Activated CD4-positive, alpha-beta T cell treated with anti-CD3 and anti-CD28 coated beads, Interleukin-2, amount 10 ng/mL, durations not matched to agents 7 days and 5 days (primary cell): ENCODE measurements at regions of chr6 and their contacts with region 1.

Region 1: GRCh38 chr6:112043032-112044007 is 10.6 kb upstream of the CCN6 start:
- DNase-seq: peak; percentile 94
- H3K4me3 Mint-ChIP-seq: peak overlapping the region; percentile 96
- H3K27ac Mint-ChIP-seq: peak overlapping the region; percentile 97
- H3K4me1 Mint-ChIP-seq: peaks cover 22% of the 10 kb centered on the region
- H3K27me3 Mint-ChIP-seq: no peaks in the 10 kb centered on the region

Region 2: DNA sequence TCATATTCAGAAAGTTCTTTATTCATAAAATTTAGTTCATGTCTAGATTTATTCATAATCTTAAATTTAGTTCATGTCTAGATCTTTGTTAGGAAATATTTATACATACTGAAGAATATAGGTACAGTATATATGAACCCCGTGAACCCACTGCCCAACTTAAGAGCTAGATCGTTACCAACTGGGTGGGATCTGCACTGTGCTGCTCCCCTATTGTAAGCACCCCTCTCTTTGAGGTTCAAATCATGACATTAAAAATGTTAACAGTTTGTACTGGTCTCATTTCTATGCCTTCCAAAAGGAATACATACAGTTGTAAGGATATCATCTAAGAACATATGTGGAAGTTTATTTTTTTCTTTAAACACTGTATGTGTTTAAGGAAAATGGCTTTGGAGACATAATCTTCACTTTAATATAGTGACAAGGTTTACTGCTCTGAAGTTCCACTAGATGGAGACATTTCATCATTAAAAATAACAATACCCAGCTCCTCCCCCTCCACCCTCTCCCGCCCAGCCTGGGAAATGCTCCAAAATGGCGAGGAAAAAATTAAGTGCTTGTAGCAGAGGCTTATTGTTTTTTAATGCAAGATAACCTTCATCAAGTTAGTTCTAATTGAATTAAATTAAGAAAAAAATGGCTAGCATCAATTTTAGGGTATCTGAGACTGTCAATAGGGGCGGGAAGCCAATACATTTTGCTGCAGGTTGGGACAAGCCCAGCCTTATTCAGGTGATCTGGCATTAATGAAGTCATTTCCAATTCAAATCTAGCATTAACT is 333.5 kb before region 1 on chr6:
- CTCF ChIA-PET with region 1: interaction called, 40 read pairs
- POLR2A ChIA-PET with region 1: no interaction called
- DNase-seq: peak; percentile 66
- H3K4me3 Mint-ChIP-seq: no peak overlapping the region
- H3K27ac Mint-ChIP-seq: peak overlapping the region; percentile 82
- H3K4me1 Mint-ChIP-seq: peaks cover 52% of the 10 kb centered on the region
- H3K27me3 Mint-ChIP-seq: no peaks in the 10 kb centered on the region

Region 3: DNA sequence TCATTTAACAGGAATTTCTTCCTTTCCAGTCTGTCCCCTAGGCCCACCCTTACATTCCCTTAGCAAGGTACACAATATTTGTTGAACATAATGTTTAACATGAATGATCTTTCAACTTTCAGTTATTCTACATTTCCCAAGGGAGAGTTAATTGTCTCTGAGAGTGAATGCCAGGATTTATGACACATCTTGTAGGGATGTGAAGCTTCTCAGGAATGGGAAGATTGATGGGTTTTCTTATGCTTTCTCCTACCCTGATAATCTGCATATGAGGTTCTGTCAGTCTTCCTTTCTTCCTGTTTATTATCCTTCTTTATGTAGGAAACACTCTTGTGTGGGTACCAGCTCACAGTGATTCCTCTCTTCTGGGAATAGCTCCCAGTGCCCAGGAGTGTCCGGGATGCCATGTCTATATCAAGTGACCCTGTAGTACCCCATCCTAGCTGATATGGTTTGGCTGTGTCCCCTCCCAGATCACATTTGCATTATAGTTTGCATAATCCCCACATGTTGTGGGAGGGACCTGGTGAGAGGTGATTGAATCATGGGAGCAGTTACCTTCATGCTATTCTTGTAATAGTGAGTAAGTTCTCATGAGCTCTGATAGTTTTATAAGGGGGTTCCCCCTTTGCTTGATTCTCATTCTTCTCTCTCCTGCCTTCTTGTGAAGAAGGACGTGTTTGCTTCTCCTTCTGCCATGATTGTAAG is 163.0 kb before region 1 on chr6:
- CTCF ChIA-PET with region 1: no interaction called
- POLR2A ChIA-PET with region 1: no interaction called
- DNase-seq: no peak
- H3K4me3 Mint-ChIP-seq: no peak overlapping the region
- H3K27ac Mint-ChIP-seq: no peak overlapping the region
- H3K4me1 Mint-ChIP-seq: no peaks in the 10 kb centered on the region
- H3K27me3 Mint-ChIP-seq: peaks cover 2% of the 10 kb centered on the region

Region 4: DNA sequence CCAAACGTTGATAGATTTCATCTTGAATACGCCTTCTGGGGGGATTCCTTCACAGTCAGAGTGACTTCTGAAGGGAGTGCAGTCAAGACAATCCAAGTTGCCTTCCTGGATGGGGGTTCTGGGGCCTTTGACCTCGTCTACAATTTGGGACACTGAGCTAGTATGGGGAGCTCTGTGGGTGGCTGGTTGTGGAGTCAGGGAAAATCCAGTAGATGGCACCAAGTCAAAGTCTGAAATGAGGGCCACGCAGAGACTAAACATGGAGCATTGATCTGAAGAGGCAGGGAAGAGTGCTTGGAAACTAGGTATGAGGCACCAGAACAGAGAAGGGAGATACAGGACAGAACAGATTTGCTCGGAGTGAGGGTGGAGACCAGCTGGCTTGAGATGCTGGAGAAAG is 33.0 kb before region 1 on chr6:
- CTCF ChIA-PET with region 1: interaction called, 37 read pairs
- POLR2A ChIA-PET with region 1: no interaction called
- DNase-seq: peak; percentile 30
- H3K4me3 Mint-ChIP-seq: no peak overlapping the region
- H3K27ac Mint-ChIP-seq: no peak overlapping the region
- H3K4me1 Mint-ChIP-seq: peaks cover 1% of the 10 kb centered on the region
- H3K27me3 Mint-ChIP-seq: no peaks in the 10 kb centered on the region

Region 5: DNA sequence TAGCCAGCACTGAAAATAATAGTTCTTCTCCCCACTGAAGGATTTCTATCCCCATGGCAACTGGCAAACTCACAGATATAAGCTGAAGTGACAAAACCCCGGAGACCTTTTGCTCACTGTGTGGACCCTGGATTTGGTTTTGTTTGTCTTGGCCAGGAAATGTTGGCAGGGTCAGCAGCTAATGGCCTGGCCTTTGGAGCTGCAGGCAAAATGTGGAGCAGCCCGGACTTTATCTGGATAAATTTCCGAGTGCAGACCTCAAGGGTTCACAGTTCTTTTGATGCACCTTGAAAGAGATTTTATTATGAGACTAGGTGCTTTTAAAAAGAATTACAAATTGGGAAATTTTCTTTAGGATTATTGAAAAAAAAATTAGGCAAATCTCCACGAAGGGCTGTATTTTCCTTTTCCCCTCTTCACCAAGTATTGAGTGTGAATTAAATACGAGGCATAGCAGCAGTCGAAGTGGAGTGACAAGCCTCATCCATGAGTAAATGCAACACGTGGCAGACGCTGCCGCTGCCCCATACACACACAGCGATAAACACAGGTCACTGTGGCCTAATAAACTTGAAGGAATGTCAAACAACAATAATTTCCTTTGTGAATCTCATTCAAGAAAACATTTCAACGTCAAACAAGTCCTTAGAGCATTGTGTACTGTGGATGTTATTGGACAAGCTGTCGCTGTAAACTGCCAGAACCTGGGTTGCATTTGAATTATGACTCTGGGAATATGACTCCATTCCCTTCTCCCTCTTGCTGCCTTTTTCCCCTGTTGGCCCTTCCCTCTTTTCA is 24.5 kb before region 1 on chr6:
- CTCF ChIA-PET with region 1: interaction called, 10 read pairs
- POLR2A ChIA-PET with region 1: no interaction called
- DNase-seq: no peak
- H3K4me3 Mint-ChIP-seq: no peak overlapping the region
- H3K27ac Mint-ChIP-seq: peak overlapping the region; percentile 16
- H3K4me1 Mint-ChIP-seq: peaks cover 42% of the 10 kb centered on the region
- H3K27me3 Mint-ChIP-seq: no peaks in the 10 kb centered on the region

Region 6: DNA sequence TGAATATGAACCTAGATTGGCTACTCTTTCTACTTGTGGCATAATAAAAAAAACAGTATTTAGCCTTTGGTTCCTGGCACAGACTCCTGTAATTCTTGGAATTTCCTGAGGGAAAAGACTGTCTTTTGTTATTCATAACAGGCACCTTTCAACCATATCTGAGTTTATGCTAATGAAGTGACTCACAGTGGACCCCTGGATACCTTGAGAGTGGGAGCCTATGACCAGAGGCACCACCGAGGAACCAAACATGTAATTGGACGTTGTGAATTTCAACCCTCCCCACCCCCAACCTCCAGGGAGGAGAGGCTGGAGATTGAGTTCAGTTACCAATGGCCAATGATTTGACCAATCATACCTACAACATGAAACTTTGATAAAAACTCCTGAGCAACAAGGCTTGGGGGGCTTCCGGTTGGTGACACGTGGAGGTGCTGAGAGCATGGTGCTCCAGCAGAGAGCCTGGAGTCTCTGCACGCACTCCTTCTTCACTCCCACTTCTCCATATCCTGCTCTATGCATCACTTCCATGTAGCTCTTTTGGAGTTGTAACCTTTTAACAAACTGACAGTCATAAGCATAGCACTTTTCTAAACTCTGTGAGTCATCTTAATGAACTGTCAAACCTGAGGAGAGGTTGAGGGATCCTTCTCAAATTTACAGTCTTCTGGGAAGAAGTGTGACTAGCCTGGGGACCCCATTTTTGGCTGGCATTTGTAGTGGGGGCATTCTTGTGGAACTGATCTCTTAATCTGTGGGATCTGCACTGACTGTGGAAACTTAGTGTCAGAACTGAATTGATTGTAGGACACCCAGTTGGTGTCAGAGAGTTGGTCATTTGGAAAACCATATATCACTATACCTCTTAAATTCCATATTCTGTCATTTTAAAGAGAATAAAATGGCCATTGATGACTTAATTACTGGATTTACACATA is 162.5 kb after region 1 on chr6:
- CTCF ChIA-PET with region 1: no interaction called
- POLR2A ChIA-PET with region 1: no interaction called
- DNase-seq: no peak
- H3K4me3 Mint-ChIP-seq: no peak overlapping the region
- H3K27ac Mint-ChIP-seq: no peak overlapping the region
- H3K4me1 Mint-ChIP-seq: no peaks in the 10 kb centered on the region
- H3K27me3 Mint-ChIP-seq: peaks cover 19% of the 10 kb centered on the region